Activated B cell treated with CpG ODN at 0.5 μM for 24 hours (primary cell): ENCODE measurements at regions of chr9 and their contacts with region 1.

Region 1: GRCh38 chr9:110152704-110153374 is 55.1 kb downstream of the C9orf152 start:
- DNase-seq: no peak
- ATAC-seq: peak; percentile 32
- H3K4me3 Mint-ChIP-seq: peak overlapping the region; percentile 39
- H3K27ac Mint-ChIP-seq: peak overlapping the region; percentile 81
- H3K4me1 Mint-ChIP-seq: peaks cover 100% of the 10 kb centered on the region
- H3K27me3 Mint-ChIP-seq: no peaks in the 10 kb centered on the region
- CTCF ChIP-seq: no peak

Region 2: GRCh38 chr9:109880277-109881169 is 272.3 kb before region 1 on chr9:
- CTCF ChIA-PET with region 1: interaction called, 5 read pairs
- POLR2A ChIA-PET with region 1: no interaction called
- intact Hi-C with region 1: loop called (anchors 2 kb)
- DNase-seq: peak; percentile 17
- ATAC-seq: peak; percentile 72
- H3K4me3 Mint-ChIP-seq: no peak overlapping the region
- H3K27ac Mint-ChIP-seq: peak overlapping the region; percentile 10
- H3K4me1 Mint-ChIP-seq: peaks cover 2% of the 10 kb centered on the region
- H3K27me3 Mint-ChIP-seq: peaks cover 10% of the 10 kb centered on the region
- CTCF ChIP-seq: no peak

Region 3: GRCh38 chr9:110058304-110058953 is 94.4 kb before region 1 on chr9:
- CTCF ChIA-PET with region 1: interaction called, 13 read pairs
- POLR2A ChIA-PET with region 1: interaction called, 5 read pairs
- intact Hi-C with region 1: loop called (anchors 1 kb)
- DNase-seq: no peak
- ATAC-seq: peak; percentile 75
- H3K4me3 Mint-ChIP-seq: peak overlapping the region; percentile 33
- H3K27ac Mint-ChIP-seq: peak overlapping the region; percentile 83
- H3K4me1 Mint-ChIP-seq: peaks cover 73% of the 10 kb centered on the region
- H3K27me3 Mint-ChIP-seq: no peaks in the 10 kb centered on the region
- CTCF ChIP-seq: no peak

Region 4: DNA sequence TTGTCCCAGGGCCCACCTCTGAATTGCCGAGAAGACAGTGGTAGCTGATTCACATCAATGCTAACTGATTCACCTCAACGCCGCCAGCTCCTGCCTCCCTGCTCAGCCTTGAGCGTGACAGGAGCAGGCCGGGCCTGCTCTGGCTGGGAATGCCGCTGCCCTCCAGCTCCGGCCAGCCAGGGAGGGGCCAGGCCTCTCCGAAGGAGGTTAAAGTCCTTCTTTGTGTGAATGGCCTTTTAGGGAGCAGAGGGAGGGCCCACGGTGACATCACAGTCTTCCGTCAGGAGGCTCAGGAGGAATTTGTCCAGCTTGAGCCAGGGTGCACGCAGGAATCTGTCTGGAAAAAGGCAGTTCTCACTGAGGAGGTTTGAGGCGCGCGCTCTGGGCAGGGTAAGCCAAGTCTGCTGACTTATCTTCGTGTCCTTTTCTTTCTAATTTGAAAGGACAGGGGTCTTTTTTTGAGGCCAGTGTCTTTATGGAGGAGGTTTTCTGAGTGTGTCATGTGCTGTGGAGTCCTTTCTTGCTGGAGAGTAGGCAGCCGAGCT is 27.6 kb before region 1 on chr9:
- CTCF ChIA-PET with region 1: interaction called, 4 read pairs
- POLR2A ChIA-PET with region 1: interaction called, 15 read pairs
- intact Hi-C with region 1: no loop called
- DNase-seq: no peak
- ATAC-seq: no peak
- H3K4me3 Mint-ChIP-seq: peak overlapping the region; percentile 71
- H3K27ac Mint-ChIP-seq: peak overlapping the region; percentile 85
- H3K4me1 Mint-ChIP-seq: peaks cover 97% of the 10 kb centered on the region
- H3K27me3 Mint-ChIP-seq: no peaks in the 10 kb centered on the region
- CTCF ChIP-seq: no peak

Region 5: GRCh38 chr9:110241260-110241857 is 88.5 kb after region 1 on chr9:
- CTCF ChIA-PET with region 1: no interaction called
- POLR2A ChIA-PET with region 1: no interaction called
- intact Hi-C with region 1: no loop called
- DNase-seq: no peak
- ATAC-seq: no peak
- H3K4me3 Mint-ChIP-seq: no peak overlapping the region
- H3K27ac Mint-ChIP-seq: no peak overlapping the region
- H3K4me1 Mint-ChIP-seq: no peaks in the 10 kb centered on the region
- H3K27me3 Mint-ChIP-seq: no peaks in the 10 kb centered on the region
- CTCF ChIP-seq: no peak